ENCODE measurements at regions of chr5 and their contacts with region 1.

Region 1: DNA sequence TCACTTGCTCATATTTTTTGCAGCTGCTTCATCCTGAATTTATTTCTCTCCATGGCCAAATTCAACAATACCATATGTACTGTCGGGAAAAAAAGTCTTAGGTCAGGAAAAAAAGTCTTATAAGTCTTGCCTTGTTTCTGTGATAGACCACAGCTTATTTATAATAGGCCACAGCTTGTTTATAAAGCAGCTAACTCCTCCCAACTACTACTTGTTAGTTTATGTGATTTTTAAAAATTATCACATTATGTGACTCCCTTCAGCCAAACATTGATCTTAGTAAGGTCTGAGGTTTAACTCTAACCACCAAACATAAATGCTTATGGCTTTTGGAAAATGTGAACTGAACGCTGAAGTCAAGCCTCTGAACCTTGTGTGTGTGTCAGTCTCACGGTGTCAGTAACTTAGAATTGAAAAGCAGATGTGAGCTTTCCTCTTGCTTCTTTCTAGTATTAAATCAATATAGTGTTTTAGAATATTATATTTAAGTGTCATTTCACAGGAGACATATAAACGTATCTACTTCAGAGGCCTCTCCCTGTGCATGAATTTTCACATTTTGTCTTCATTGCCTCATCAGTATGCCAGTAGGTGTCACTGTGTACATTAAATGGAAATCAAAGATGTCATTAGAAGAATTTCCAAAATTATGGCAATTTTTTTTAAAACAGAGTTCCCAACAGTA is 51.3 kb downstream of the SNX24 start:
- DNase-seq: peak; percentile 34
- H3K4me3 ChIP-seq: no peak overlapping the region
- H3K27ac ChIP-seq: no peak overlapping the region
- H3K4me1 ChIP-seq: no peaks in the 10 kb centered on the region
- H3K27me3 ChIP-seq: no peaks in the 10 kb centered on the region
- CTCF ChIP-seq: peak; percentile 68

Region 2: GRCh38 chr5:122515709-122516431 is 380.9 kb before region 1 on chr5:
- CTCF ChIA-PET with region 1: no interaction called
- POLR2A ChIA-PET with region 1: no interaction called
- intact Hi-C with region 1: loop called (anchors 5 kb)
- DNase-seq: peak; percentile 65
- H3K4me3 ChIP-seq: no peak overlapping the region
- H3K27ac ChIP-seq: no peak overlapping the region
- H3K4me1 ChIP-seq: no peaks in the 10 kb centered on the region
- H3K27me3 ChIP-seq: peaks cover 12% of the 10 kb centered on the region
- CTCF ChIP-seq: peak; percentile 73

Region 3: DNA sequence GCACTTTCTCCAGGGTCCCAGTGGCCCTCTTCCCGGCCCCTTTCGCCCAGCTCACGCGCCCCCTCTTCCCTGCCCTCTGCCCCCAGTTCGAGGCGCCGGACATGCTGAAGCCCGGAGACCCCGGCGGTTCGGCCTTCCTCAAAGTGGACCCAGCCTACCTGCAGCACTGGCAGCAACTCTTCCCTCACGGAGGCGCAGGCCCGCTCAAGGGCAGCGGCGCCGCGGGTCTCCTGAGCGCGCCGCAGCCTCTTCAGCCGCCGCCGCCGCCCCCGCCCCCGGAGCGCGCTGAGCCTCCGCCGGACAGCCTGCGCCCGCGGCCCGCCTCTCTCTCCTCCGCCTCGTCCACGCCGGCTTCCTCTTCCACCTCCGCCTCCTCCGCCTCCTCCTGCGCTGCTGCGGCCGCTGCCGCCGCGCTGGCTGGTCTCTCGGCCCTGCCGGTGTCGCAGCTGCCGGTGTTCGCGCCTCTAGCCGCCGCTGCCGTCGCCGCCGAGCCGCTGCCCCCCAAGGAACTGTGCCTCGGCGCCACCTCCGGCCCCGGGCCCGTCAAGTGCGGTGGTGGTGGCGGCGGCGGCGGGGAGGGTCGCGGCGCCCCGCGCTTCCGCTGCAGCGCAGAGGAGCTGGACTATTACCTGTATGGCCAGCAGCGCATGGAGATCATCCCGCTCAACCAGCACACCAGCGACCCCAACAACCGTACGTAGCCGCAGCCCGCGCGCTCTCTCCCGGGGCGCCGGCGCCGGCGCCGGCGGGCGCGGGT is 193.4 kb after region 1 on chr5:
- CTCF ChIA-PET with region 1: no interaction called
- POLR2A ChIA-PET with region 1: no interaction called
- intact Hi-C with region 1: loop called (anchors 5 kb)
- DNase-seq: no peak
- H3K4me3 ChIP-seq: peak overlapping the region; percentile 38
- H3K27ac ChIP-seq: no peak overlapping the region
- H3K4me1 ChIP-seq: peaks cover 5% of the 10 kb centered on the region
- H3K27me3 ChIP-seq: peaks cover 99% of the 10 kb centered on the region
- CTCF ChIP-seq: no peak

Region 4: DNA sequence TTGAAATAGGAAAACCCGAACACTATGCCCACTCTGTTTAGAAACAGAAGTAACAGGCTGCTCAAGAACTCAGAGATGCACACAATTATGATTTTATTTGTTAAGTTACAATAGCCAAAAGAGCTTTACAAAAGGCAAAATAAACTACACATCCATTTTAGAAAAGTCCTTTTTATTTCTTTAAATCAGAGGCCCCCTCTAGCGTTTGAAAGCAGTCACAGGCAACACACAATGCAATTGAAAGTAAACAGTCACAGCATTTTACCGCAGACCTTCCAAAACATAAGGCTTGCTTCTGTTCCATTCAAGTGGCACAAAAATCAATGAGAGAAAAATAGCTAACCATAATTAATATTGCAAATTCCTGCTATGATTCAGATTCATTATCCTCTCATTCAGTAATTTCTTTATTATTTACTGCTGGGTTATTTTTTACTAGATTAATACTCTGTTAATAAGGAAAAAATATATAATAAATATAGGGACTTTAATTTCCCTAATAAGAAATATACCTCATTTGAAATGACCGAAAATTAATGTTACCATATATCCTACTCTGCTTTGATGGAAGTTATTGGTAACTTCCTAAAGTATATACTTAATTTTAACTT is 448.2 kb after region 1 on chr5:
- CTCF ChIA-PET with region 1: no interaction called
- POLR2A ChIA-PET with region 1: no interaction called
- intact Hi-C with region 1: loop called (anchors 5 kb)
- DNase-seq: peak; percentile 57
- H3K4me3 ChIP-seq: no peak overlapping the region
- H3K27ac ChIP-seq: no peak overlapping the region
- H3K4me1 ChIP-seq: no peaks in the 10 kb centered on the region
- H3K27me3 ChIP-seq: no peaks in the 10 kb centered on the region
- CTCF ChIP-seq: peak; percentile 78

Region 5: GRCh38 chr5:123371575-123372179 is 474.9 kb after region 1 on chr5:
- CTCF ChIA-PET with region 1: no interaction called
- POLR2A ChIA-PET with region 1: no interaction called
- intact Hi-C with region 1: loop called (anchors 2 kb)
- DNase-seq: peak; percentile 63
- H3K4me3 ChIP-seq: no peak overlapping the region
- H3K27ac ChIP-seq: no peak overlapping the region
- H3K4me1 ChIP-seq: peaks cover 5% of the 10 kb centered on the region
- H3K27me3 ChIP-seq: no peaks in the 10 kb centered on the region
- CTCF ChIP-seq: peak; percentile 82